ENCODE measurements at regions of chr16 and their contacts with region 1.

Region 1: DNA sequence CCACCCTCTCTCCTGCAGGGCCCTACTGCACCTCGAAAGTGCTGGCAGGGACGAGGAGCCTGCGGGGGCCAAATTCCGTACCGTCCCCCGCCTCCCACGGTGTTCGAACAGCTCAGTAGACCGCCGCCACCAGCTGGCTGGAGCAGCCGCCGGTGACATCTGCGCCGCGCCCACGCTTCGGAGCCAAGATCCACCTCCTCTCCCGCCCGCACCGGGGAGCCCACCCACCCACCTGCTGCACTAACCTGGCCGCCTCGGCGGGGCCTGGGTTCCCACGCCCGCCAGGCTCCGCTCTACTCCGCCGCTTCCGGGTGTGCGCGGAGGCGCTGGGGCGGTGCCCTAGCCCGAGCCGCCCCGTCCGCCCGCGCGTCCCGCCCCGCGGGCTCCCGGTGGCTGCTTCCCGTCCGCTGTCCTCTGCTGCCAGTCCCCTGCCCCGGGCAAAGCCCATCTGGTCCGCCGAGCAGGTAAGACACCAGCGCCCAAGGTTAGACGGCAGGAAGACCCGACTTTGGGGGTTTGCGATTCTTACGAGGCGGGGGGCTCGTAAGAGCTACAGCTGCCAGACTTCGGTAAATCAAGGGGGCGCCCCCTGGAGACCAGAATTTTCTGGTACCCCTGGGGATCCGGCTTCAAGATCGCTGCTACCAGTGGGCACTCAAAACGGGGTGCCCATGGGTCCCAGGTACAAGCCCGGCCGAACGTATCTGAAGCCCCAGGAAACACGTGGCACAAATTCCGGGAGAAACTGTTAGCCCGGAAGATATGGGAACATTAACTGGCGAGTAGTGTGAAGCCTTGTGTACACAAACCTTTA is at the starts of genes FBXL8 and TRADD:
- DNase-seq: peak; percentile 70
- ATAC-seq: peak; percentile 66
- H3K4me3 ChIP-seq: peak within 1 kb of the TSS; percentile 95
- H3K27ac ChIP-seq: peak within 1 kb of the TSS; percentile 43; the same call in 1 of the 2 replicates
- H3K4me1 ChIP-seq: peaks cover 21% of the 10 kb centered on the region
- H3K27me3 ChIP-seq: no peaks in the 10 kb centered on the region
- CTCF ChIP-seq: peak; percentile 59
- total RNA-seq, gene FBXL8: 8.7 and 13.1 TPM in 2 replicates
- total RNA-seq, gene TRADD: 19.4 and 26.6 TPM in 2 replicates

Region 2: GRCh38 chr16:67017810-67018488 is 141.9 kb before region 1 on chr16:
- CTCF ChIA-PET with region 1: interaction called, 10 read pairs
- POLR2A ChIA-PET with region 1: no interaction called
- intact Hi-C with region 1: loop called (anchors 5 kb)
- DNase-seq: peak; percentile 93
- ATAC-seq: peak; percentile 88
- H3K4me3 ChIP-seq: no peak overlapping the region
- H3K27ac ChIP-seq: no peak overlapping the region
- H3K4me1 ChIP-seq: peaks cover 7% of the 10 kb centered on the region
- H3K27me3 ChIP-seq: no peaks in the 10 kb centered on the region
- CTCF ChIP-seq: peak; percentile 82

Region 3: GRCh38 chr16:67173808-67174705 is 14.3 kb after region 1 on chr16:
- CTCF ChIA-PET with region 1: interaction called, 10 read pairs
- POLR2A ChIA-PET with region 1: no interaction called
- intact Hi-C with region 1: loop called (anchors 2 kb)
- DNase-seq: peak; percentile 87
- ATAC-seq: peak; percentile 67
- H3K4me3 ChIP-seq: peak overlapping the region; percentile 71
- H3K27ac ChIP-seq: peak overlapping the region; percentile 69
- H3K4me1 ChIP-seq: peaks cover 51% of the 10 kb centered on the region
- H3K27me3 ChIP-seq: no peaks in the 10 kb centered on the region
- CTCF ChIP-seq: peak; percentile 16; the same call in 1 of the 2 replicates

Region 4: DNA sequence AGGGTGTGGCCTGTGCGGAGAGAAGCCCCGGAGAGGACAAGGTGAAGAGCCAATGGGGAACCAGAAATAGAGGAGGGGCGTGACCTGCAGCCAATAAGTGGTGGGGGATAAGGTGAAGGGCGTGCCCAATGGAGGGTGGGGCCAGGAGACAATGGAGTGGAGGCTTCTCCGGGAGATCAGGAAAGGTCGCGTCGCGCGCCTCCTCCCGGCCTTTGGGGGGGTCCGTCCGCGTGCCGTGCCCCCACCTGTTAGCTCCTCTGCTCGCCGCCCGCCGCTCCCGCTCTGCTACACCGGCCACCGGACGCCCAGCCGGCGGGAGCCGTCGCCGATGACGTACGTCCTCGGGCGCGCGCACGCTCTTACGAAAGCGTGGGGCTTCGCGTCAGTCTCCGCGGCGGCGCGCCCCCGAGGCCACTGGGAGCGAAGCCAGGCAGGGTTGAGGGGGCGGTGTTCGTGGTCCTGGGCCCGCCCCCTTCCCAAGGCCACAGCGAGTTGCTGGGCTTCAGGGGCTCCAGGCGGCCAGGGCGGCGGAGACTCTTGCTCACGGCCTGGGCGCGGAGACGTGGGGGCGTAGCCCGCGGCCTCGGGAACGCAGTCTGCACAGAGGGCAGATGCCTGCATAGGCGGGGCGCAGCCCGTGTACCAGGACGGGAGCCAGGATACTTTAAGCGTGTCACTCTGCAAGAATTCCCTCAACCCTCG is 24.0 kb after region 1 on chr16 and contains the start of gene MATCAP1:
- CTCF ChIA-PET with region 1: interaction called, 4 read pairs
- POLR2A ChIA-PET with region 1: no interaction called
- intact Hi-C with region 1: loop called (anchors 1 kb)
- DNase-seq: peak; percentile 93
- ATAC-seq: peak; percentile 75
- H3K4me3 ChIP-seq: peak within 1 kb of the TSS; percentile 79
- H3K27ac ChIP-seq: peak within 1 kb of the TSS; percentile 85
- H3K4me1 ChIP-seq: peaks cover 41% of the 10 kb centered on the region
- H3K27me3 ChIP-seq: no peaks in the 10 kb centered on the region
- CTCF ChIP-seq: no peak
- total RNA-seq, gene MATCAP1: 22.6 and 29.6 TPM in 2 replicates